Dorsolateral prefrontal cortex (tissue), 120 donors: ENCODE measurements at regions of chr4 and their contacts with region 1.

Region 1: GRCh38 chr4:6250235-6250983 is 19.2 kb upstream of the WFS1 start:
- DNase-seq: peak in 1 of 10 donors; percentile 37
- H3K4me3 ChIP-seq: peak overlapping the region in 26 of 59 donors; percentile 3 to 44 (median 21)
- H3K27ac ChIP-seq: peak overlapping the region in 7 of 59 donors; percentile 12 to 65 (median 27)
- H3K27me3 ChIP-seq: no peaks in the 10 kb centered on the region
- CTCF ChIP-seq: peak; percentile 77 to 96 (median 88)

Region 2: GRCh38 chr4:6109842-6110719 is 140.3 kb before region 1 on chr4:
- intact Hi-C with region 1: no loop called
- DNase-seq: peak in 1 of 10 donors; percentile 40
- H3K4me3 ChIP-seq: no peak overlapping the region
- H3K27ac ChIP-seq: no peak overlapping the region
- H3K27me3 ChIP-seq: peaks cover 0 to 2% (median 0%) of the 10 kb centered on the region in 45 donors
- CTCF ChIP-seq: peak in 37 of 56 donors; percentile 10 to 55 (median 28)

Region 3: GRCh38 chr4:6269616-6270511 is 19.5 kb after region 1 on chr4 and contains the start of gene WFS1:
- intact Hi-C with region 1: loop called in 1 of 2 experiments (anchors 2 kb)
- DNase-seq: peak; percentile 96 to 99 (median 98)
- H3K4me3 ChIP-seq: peak within 1 kb of the TSS; percentile 56 to 100 (median 93)
- H3K27ac ChIP-seq: peak within 1 kb of the TSS in 53 of 59 donors; percentile 29 to 89 (median 72)
- H3K27me3 ChIP-seq: no peaks in the 10 kb centered on the region
- CTCF ChIP-seq: peak in 27 of 56 donors; percentile 3 to 42 (median 19)
- total RNA-seq, gene WFS1: 39.0 to 119 (median 62.4) TPM